ENCODE measurements at regions of chr17 and their contacts with region 1.

Region 1: GRCh38 chr17:13017659-13018459 is at the start of gene ELAC2:
- DNase-seq: peak; percentile 100
- ATAC-seq: peak; percentile 98
- H3K4me3 ChIP-seq: peak within 1 kb of the TSS; percentile 90
- H3K27ac ChIP-seq: peak within 1 kb of the TSS; percentile 75
- H3K4me1 ChIP-seq: peaks cover 18% of the 10 kb centered on the region; the same call in 1 of the 2 replicates
- H3K27me3 ChIP-seq: no peaks in the 10 kb centered on the region
- CTCF ChIP-seq: no peak; the same call in 1 of the 2 replicates
- total RNA-seq, gene ELAC2: 270 and 290 TPM in 2 replicates

Region 2: GRCh38 chr17:13030459-13031300 is 12.8 kb after region 1 on chr17:
- CTCF ChIA-PET with region 1: interaction called, 11 read pairs
- POLR2A ChIA-PET with region 1: no interaction called
- intact Hi-C with region 1: no loop called
- DNase-seq: peak; percentile 87
- ATAC-seq: no peak
- H3K4me3 ChIP-seq: no peak overlapping the region
- H3K27ac ChIP-seq: no peak overlapping the region
- H3K4me1 ChIP-seq: no peaks in the 10 kb centered on the region
- H3K27me3 ChIP-seq: peaks cover 8% of the 10 kb centered on the region; the same call in 1 of the 2 replicates
- CTCF ChIP-seq: peak; percentile 95

Measured in PC-3 (cell line).